ENCODE measurements at regions of chr5 and their contacts with region 1.

Region 1: DNA sequence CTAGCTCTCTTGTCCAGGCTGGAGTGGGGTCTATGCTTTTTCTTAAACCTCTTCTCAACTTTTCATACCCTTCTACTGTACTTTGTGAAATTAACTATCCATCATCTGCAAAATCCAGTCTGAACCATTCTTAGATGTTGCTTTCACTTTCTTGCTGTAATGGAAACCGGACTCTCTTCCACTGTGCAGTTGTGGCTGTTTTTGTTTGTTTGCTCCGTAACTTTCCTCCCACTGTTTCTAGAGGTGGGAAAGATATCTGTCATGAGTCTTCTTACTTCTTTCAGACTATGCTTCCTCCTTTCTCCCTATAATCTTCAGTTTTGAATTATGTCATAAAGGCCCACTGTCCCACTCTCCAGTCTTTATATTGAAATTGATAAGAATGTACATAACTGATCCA is 6.5 kb downstream of the TNPO1 start:
- DNase-seq: no peak
- ATAC-seq: no peak
- H3K4me3 ChIP-seq: no peak overlapping the region
- H3K27ac ChIP-seq: no peak overlapping the region
- H3K4me1 ChIP-seq: peaks cover 8 to 31% of the 10 kb centered on the region in 2 donors
- H3K27me3 ChIP-seq: no peaks in the 10 kb centered on the region
- CTCF ChIP-seq: no peak

Region 2: DNA sequence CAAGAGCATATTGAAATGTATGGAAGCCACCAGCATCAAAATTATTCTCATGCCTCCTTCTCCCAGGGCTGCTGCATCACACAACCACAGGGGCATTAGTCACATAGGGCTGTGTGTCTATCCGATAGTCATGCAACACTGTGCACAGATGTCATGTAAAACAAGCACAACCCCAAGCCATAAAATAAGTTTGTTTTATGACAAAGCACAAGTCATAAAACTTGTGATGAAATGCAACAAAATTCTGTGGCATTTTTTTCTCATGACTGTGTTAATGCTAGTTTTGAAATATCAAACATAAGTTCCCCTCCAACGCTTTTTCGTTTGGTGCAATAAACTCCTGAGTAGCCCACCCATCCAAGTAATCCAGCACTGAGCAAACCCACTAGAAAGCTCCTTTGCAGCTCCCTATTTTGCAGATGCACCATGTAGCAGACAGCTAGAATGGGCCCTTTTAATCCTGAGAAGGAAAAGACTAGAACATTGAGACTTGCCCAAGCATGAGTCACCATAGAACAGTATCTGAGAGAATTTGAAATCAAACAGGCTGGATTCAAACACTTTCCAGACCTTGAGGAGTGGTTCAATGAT is 222.5 kb before region 1 on chr5:
- intact Hi-C with region 1: loop called in 1 of 2 experiments (anchors 10 kb)
- DNase-seq: no peak
- ATAC-seq: peak; percentile 46
- H3K4me3 ChIP-seq: no peak overlapping the region
- H3K27ac ChIP-seq: peak overlapping the region; percentile 65 to 78
- H3K4me1 ChIP-seq: peaks cover 0 to 22% of the 10 kb centered on the region in 2 donors
- H3K27me3 ChIP-seq: no peaks in the 10 kb centered on the region
- CTCF ChIP-seq: no peak

Region 3: DNA sequence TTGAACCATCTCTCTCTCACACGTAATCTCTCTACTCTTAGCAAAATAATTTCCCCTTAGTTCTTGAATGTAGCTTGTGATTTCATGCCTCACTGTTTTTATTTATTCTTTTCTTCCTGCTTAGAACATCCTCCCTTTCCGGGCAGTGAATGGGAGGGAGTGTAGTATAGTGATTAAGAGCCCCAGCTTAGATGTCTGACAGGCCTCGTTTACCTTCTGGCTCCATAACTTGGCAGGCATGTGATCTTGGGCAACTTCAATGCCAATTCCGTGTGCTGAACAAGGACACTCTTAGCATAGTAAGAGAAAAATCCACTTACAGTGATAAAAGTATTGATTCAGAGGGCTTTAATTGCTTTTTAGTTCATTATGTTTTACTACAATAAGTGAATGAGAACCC is 102.7 kb before region 1 on chr5:
- intact Hi-C with region 1: no loop called
- DNase-seq: no peak
- ATAC-seq: no peak
- H3K4me3 ChIP-seq: no peak overlapping the region
- H3K27ac ChIP-seq: no peak overlapping the region
- H3K4me1 ChIP-seq: no peaks in the 10 kb centered on the region
- H3K27me3 ChIP-seq: no peaks in the 10 kb centered on the region
- CTCF ChIP-seq: no peak

Measured in left lung (tissue), 14 donors.